ENCODE measurements at regions of chr2 and their contacts with region 1.

Region 1: DNA sequence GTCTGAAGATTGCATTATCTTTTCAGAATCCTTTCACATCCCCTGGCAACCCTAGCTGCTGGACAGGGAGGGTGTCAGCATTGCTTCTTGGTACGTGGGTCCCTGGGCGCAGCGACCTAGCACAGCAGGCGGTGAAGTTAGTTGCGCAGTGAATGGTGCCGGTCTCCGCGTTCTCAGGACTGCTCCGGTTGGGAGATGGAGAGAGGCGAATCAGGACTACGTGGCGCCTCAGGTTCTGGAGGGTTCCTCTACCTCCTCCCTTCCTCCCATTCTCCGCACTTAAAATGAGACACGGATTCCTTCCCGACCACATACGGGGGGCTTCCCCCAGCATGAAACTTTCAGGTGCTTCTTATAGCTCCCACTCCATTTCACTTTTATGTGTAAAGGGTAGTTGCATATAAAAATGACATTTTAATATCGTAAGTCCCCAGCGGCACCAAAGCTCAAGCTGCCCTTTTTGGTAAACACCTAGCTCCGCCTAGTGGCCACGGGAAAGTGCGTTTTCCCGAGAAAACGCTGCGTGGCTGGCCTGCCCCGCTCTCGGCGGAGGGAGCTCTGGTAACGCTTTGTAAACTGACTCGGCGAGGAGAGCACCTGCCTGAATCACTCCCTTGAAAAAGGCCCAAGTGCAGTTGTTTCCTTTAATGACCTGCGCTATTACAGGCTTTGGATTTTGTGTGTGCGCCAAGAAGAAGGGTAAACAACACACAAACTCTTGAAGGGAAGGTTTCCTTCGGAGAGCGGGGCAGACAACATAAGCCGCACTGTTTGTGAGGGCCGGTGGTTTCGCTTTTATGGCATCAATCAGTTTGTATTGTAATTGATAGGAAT is 32.9 kb upstream of the INHBB start:
- DNase-seq: peak; percentile 56 to 65 (median 61)
- H3K4me3 ChIP-seq: peak overlapping the region; percentile 15 to 48
- H3K4me3 Mint-ChIP-seq: peak overlapping the region; percentile 66 to 91 (median 84)
- H3K27ac ChIP-seq: no peak overlapping the region
- H3K27ac Mint-ChIP-seq: peak overlapping the region in 6 of 7 donors; percentile 32 to 78 (median 62)
- H3K4me1 ChIP-seq: peaks cover 19% of the 10 kb centered on the region
- H3K4me1 Mint-ChIP-seq: peaks cover 11 to 29% (median 21%) of the 10 kb centered on the region in 4 donors
- H3K27me3 ChIP-seq: no peaks in the 10 kb centered on the region
- H3K27me3 Mint-ChIP-seq: peaks cover 0 to 4% of the 10 kb centered on the region in 2 donors

Region 2: DNA sequence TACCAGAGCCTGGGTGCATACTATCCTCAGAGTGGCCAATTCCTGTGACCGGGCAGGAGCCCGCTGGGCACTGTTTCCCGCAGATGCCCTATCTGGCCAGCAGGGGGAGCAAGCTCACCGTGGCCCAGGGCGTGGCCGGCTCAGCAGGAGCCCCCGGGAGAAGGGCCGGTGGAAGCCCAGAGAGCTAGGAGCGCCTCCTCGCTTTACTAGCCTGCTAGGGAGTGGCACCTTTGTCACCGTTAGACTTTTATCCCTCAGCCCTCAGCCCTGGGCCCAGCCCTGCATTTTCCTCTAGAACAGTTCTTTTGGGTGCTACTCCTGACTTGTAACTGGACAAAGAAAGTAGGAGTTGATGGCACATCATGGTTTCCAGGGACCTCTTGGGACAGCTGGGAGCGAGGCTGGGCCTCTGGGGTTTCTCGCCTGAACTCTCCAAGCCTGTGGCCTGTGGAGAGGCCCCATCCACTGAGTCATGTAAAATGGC is 610.1 kb before region 1 on chr2:
- CTCF ChIA-PET with region 1: interaction called, 22 read pairs
- POLR2A ChIA-PET with region 1: no interaction called
- intact Hi-C with region 1: loop called (anchors 1 kb)
- DNase-seq: peak in 4 of 5 donors; percentile 55 to 69 (median 60)
- H3K4me3 ChIP-seq: no peak overlapping the region
- H3K4me3 Mint-ChIP-seq: peak overlapping the region in 2 of 8 donors; percentile 15 to 20
- H3K27ac ChIP-seq: no peak overlapping the region
- H3K27ac Mint-ChIP-seq: peak overlapping the region in 2 of 7 donors; percentile 22 to 64
- H3K4me1 ChIP-seq: peaks cover 20% of the 10 kb centered on the region
- H3K4me1 Mint-ChIP-seq: peaks cover 1 to 23% (median 13%) of the 10 kb centered on the region in 4 donors
- H3K27me3 ChIP-seq: no peaks in the 10 kb centered on the region
- H3K27me3 Mint-ChIP-seq: no peaks in the 10 kb centered on the region

Region 3: DNA sequence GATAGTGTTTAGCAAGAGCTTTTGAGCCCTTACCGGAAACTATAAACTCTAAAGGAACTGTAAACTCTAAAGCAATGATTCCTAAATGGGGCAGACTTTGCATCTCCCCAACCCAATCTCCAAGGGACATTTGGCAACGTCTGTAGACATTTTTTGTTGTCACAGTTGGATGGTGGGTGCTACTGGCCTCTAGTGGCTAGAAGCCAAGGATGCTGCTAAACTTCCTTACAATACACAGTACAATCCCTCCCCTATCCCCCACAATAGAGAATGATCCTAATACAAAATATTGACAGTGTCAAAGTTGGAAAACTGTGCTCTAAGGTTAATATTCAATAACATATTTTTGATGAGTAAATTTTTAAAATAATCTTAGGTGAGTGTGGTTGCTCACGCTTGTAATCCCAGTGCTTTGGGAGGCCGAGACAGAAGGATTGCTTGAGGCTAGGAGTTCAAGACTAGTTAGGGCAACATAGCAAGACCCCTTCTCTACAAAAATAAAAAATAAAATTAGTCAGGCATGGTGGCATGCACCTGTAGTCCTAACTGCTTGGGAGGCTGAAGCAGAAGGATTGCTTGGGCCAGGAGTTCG is 486.6 kb before region 1 on chr2:
- CTCF ChIA-PET with region 1: no interaction called
- POLR2A ChIA-PET with region 1: no interaction called
- intact Hi-C with region 1: loop called (anchors 10 kb)
- DNase-seq: peak in 4 of 5 donors; percentile 38 to 49 (median 41)
- H3K4me3 ChIP-seq: no peak overlapping the region
- H3K4me3 Mint-ChIP-seq: no peak overlapping the region
- H3K27ac ChIP-seq: no peak overlapping the region
- H3K27ac Mint-ChIP-seq: peak overlapping the region in 2 of 7 donors; percentile 31 to 32
- H3K4me1 ChIP-seq: peaks cover 5% of the 10 kb centered on the region
- H3K4me1 Mint-ChIP-seq: peaks cover 27 to 54% (median 44%) of the 10 kb centered on the region in 4 donors
- H3K27me3 ChIP-seq: no peaks in the 10 kb centered on the region
- H3K27me3 Mint-ChIP-seq: no peaks in the 10 kb centered on the region

Region 4: DNA sequence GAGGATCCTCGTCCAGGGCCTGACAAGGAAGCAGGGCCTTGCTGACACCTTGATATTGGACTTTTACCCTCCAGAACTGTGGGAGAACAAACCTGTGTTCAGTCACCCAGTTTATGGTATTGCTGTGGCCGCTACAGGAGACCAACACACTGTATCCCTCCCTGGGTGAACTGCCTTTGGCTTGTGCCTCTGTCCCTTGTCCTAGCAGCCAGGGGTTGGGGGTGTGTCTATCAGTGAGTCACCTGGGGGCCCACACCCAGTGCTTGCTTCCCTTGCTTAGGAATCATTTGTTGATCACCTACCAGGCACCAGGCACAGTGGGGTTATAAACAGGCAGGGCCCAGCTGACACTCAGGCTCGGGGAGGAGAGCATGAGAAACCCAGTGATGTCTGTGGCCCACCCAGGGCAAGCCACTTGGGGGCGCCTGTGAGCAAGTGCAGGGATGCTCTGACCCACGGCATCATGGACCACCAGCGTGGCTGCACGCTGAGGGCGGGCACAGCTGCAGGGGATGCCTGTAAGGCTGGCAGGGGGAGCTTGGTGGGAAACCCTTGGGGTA is 107.0 kb before region 1 on chr2:
- CTCF ChIA-PET with region 1: interaction called, 50 read pairs
- POLR2A ChIA-PET with region 1: interaction called, 3 read pairs
- intact Hi-C with region 1: loop called (anchors 1 kb)
- DNase-seq: no peak
- H3K4me3 ChIP-seq: no peak overlapping the region
- H3K4me3 Mint-ChIP-seq: no peak overlapping the region
- H3K27ac ChIP-seq: no peak overlapping the region
- H3K27ac Mint-ChIP-seq: peak overlapping the region in 1 of 7 donors; percentile 59
- H3K4me1 ChIP-seq: peaks cover 14% of the 10 kb centered on the region
- H3K4me1 Mint-ChIP-seq: peaks cover 0 to 17% (median 9%) of the 10 kb centered on the region in 4 donors
- H3K27me3 ChIP-seq: no peaks in the 10 kb centered on the region
- H3K27me3 Mint-ChIP-seq: no peaks in the 10 kb centered on the region

Region 5: DNA sequence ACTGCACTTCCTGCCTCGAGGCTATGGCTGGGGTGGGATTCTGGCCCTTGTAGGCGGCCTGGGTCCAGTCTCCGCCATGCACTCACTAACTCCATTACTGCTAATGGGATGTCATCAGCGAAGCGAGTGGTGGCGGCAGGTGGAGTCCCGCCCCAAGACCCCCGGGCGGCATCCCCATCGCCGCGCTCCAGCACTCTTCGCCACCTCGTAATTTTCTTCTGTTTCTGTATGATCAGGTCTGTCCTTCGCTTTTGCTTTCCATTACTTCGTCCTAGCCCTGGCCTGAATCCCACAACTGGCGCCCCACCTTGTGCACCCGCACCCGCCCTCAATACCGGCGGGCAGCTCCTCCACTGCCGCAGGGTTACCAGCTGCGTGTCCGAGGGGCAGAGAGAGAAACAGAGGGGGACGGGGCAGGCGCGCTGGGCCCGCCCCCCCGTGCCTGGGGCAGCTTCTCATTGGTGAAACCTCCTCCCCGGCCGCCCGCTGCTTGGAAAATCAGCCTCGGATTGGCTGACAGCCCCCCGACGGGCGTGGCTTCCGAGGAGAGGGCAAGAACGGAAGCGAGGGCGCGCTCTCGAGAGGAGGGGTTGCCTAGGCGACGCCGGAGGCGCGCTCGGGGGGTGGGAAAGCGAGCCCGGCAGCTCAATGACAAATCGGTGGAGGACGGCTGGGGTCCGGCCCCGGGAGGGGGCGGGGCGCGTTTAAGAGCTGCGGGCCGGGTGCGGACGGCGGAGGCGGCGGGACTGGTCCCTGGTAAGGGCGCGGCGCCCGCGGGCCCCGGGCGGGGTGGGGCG is 60.7 kb before region 1 on chr2 and contains the start of gene RALB:
- CTCF ChIA-PET with region 1: interaction called, 18 read pairs
- POLR2A ChIA-PET with region 1: interaction called, 9 read pairs
- intact Hi-C with region 1: loop called (anchors 1 kb)
- DNase-seq: peak; percentile 97 to 99 (median 97)
- H3K4me3 ChIP-seq: peak within 1 kb of the TSS; percentile 78 to 80
- H3K4me3 Mint-ChIP-seq: peak within 1 kb of the TSS; percentile 99 to 100 (median 100)
- H3K27ac ChIP-seq: peak within 1 kb of the TSS; percentile 61
- H3K27ac Mint-ChIP-seq: peak within 1 kb of the TSS; percentile 87 to 99 (median 98)
- H3K4me1 ChIP-seq: peaks cover 44% of the 10 kb centered on the region
- H3K4me1 Mint-ChIP-seq: peaks cover 37 to 51% (median 43%) of the 10 kb centered on the region in 4 donors
- H3K27me3 ChIP-seq: no peaks in the 10 kb centered on the region
- H3K27me3 Mint-ChIP-seq: peaks cover 1 to 3% of the 10 kb centered on the region in 2 donors
- total RNA-seq, gene RALB: 14.0 TPM